Caco-2 (cell line): ENCODE measurements at regions of chr19 and their contacts with region 1.

Region 1: GRCh38 chr19:48713864-48714758 is 5.4 kb downstream of the MAMSTR start:
- DNase-seq: peak; percentile 100
- H3K4me3 ChIP-seq: peak overlapping the region; percentile 75
- H3K4me3 Mint-ChIP-seq: peak overlapping the region; percentile 84
- H3K27ac Mint-ChIP-seq: peak overlapping the region; percentile 90
- H3K4me1 ChIP-seq: peaks cover 16% of the 10 kb centered on the region
- H3K4me1 Mint-ChIP-seq: peaks cover 33% of the 10 kb centered on the region
- H3K27me3 ChIP-seq: no peaks in the 10 kb centered on the region
- H3K27me3 Mint-ChIP-seq: no peaks in the 10 kb centered on the region
- CTCF ChIP-seq: no peak

Region 2: DNA sequence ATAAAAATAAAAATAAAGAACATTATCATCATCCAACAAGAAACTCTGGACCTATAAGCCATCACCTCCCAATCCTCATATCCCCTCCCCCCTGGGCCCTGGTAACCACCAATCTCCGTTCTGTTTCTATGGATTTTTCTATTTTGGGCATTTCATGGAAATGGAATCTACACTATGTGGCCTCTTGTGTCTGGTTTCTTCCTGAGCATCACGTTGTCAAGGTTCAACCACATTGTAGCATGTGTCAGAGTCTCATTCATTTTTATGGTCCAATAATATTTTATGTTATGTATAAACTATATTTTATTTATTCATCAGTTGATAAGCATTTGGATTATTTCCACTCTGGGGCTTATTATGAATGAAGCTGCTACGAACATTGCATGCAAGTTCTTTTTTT is 135.2 kb before region 1 on chr19:
- CTCF ChIA-PET with region 1: no interaction called
- POLR2A ChIA-PET with region 1: no interaction called
- intact Hi-C with region 1: no loop called
- DNase-seq: no peak
- H3K4me3 ChIP-seq: no peak overlapping the region
- H3K4me3 Mint-ChIP-seq: no peak overlapping the region
- H3K27ac Mint-ChIP-seq: no peak overlapping the region
- H3K4me1 ChIP-seq: peaks cover 10% of the 10 kb centered on the region
- H3K4me1 Mint-ChIP-seq: peaks cover 1% of the 10 kb centered on the region
- H3K27me3 ChIP-seq: no peaks in the 10 kb centered on the region
- H3K27me3 Mint-ChIP-seq: no peaks in the 10 kb centered on the region
- CTCF ChIP-seq: no peak

Region 3: GRCh38 chr19:48637170-48637947 is 76.8 kb before region 1 on chr19 and contains the start of gene DBP:
- CTCF ChIA-PET with region 1: no interaction called
- POLR2A ChIA-PET with region 1: no interaction called
- intact Hi-C with region 1: no loop called
- DNase-seq: peak; percentile 100
- H3K4me3 ChIP-seq: peak within 1 kb of the TSS; percentile 63
- H3K4me3 Mint-ChIP-seq: peak within 1 kb of the TSS; percentile 80
- H3K27ac Mint-ChIP-seq: peak within 1 kb of the TSS; percentile 96
- H3K4me1 ChIP-seq: peaks cover 33% of the 10 kb centered on the region
- H3K4me1 Mint-ChIP-seq: peaks cover 36% of the 10 kb centered on the region
- H3K27me3 ChIP-seq: no peaks in the 10 kb centered on the region
- H3K27me3 Mint-ChIP-seq: no peaks in the 10 kb centered on the region
- CTCF ChIP-seq: no peak
- total RNA-seq, gene DBP: 17.4 and 17.7 TPM in 2 replicates

Region 4: DNA sequence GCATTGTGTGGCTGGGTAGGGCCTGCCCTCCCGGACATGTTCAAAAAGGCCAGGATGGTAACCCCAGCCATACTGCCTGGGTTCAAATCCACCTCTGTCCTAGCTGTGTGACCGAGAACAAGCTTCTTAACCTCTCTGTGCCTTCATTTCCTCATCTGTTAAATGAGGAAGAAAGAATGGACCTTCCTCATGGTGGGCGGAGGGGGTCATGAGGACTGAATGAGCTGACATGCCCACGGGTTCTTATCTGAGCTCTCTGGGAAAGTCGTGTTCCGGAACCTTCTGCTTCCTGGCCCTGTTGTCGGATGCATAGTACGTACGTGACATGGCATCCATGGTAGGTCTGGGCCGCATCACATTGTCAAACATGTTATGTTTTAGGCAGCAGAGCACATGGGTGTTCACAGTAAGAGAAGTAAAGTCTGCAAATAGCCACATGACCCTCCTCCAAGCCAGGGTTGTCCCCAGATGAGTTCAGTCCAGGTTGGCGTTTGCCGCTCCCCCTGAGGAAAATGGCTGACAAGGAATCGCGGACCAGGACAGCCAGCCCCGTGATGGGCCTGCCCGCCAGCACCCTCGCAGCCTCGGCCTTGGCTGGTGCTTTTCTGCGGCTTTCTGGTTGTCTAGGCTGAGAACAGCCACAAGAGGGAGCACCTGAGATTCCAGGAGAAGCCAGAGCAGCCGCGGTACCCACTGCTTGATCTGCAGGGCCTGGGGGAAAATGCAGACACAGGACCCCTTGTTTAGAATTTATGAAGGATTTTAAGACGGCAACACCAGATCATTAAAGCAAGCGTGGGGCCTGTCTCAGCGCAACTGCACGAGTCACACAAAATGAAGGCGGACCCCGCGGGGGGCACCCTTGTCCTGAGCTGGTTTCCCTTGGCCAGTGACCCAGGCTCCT is 38.9 kb before region 1 on chr19:
- CTCF ChIA-PET with region 1: interaction called, 16 read pairs
- POLR2A ChIA-PET with region 1: interaction called, 3 read pairs
- intact Hi-C with region 1: loop called (anchors 5 kb)
- DNase-seq: peak; percentile 88 to 90
- H3K4me3 ChIP-seq: no peak overlapping the region
- H3K4me3 Mint-ChIP-seq: no peak overlapping the region
- H3K27ac Mint-ChIP-seq: peak overlapping the region; percentile 46
- H3K4me1 ChIP-seq: peaks cover 6% of the 10 kb centered on the region
- H3K4me1 Mint-ChIP-seq: peaks cover 13% of the 10 kb centered on the region
- H3K27me3 ChIP-seq: no peaks in the 10 kb centered on the region
- H3K27me3 Mint-ChIP-seq: no peaks in the 10 kb centered on the region
- CTCF ChIP-seq: peak; percentile 88 to 95

Region 5: DNA sequence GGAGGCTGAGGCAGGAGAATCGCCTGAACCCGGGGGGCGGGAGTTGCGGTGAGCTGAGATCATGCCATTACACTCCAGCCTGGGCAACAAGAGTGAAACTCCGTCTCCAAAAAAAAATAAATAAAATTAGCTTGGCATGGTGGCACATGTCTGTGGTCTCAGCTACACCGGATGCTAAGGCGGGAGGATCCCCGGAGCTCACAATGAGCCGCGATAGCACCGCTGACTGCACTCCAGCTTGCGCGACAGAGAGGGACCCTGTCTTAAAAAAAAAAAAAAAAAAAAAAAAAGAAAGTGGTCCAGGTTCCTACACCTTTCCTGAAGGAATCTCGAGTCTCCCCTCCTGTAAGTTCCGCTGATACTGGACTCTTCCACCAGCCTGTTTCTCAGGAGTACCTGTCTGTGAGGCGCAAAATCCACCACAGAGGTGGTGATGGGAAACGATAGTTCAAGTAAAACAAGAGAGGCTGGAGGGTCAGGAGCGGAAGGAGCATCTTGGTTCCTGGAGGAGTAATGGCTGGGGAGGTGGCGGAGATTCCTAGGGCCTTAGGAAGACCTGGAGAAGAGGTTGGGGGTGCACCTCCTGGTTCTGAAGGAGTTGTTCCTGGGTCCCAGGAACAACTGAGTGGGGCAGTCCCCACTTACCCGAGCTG is 37.9 kb after region 1 on chr19:
- CTCF ChIA-PET with region 1: no interaction called
- POLR2A ChIA-PET with region 1: no interaction called
- intact Hi-C with region 1: no loop called
- DNase-seq: no peak
- H3K4me3 ChIP-seq: peak overlapping the region; percentile 39
- H3K4me3 Mint-ChIP-seq: peak overlapping the region; percentile 89
- H3K27ac Mint-ChIP-seq: peak overlapping the region; percentile 82
- H3K4me1 ChIP-seq: peaks cover 29% of the 10 kb centered on the region
- H3K4me1 Mint-ChIP-seq: peaks cover 35% of the 10 kb centered on the region
- H3K27me3 ChIP-seq: no peaks in the 10 kb centered on the region
- H3K27me3 Mint-ChIP-seq: no peaks in the 10 kb centered on the region
- CTCF ChIP-seq: no peak